PC-3 (cell line): ENCODE measurements at regions of chr6 and their contacts with region 1.

Region 1: DNA sequence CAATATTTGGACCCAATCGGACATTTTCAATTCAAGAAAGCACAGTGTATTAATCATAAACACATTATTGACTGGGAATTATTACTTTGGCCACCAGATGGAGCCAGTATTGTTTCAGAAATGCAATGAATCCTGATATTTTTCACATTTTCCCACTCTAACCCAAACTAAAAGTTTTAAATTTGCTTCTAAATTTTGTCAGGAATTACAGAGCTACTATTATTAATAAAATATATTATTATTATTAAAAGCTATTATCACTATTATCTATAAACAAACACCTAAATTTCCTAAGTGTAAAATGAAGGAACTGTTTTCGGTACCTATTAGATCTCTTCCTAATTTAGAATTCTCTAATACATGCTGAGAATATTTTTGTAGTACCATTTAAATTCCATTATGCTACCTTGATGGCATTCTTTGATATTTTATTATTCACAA is 245.3 kb downstream of the OGFRL1 start:
- DNase-seq: peak; percentile 45
- ATAC-seq: no peak
- H3K4me3 ChIP-seq: no peak overlapping the region
- H3K27ac ChIP-seq: no peak overlapping the region
- H3K4me1 ChIP-seq: peaks cover 4% of the 10 kb centered on the region
- H3K27me3 ChIP-seq: no peaks in the 10 kb centered on the region
- CTCF ChIP-seq: peak; percentile 48; the same call in 1 of the 2 replicates

Region 2: GRCh38 chr6:71621918-71622519 is 88.1 kb after region 1 on chr6:
- CTCF ChIA-PET with region 1: no interaction called
- POLR2A ChIA-PET with region 1: no interaction called
- intact Hi-C with region 1: loop called (anchors 5 kb)
- DNase-seq: peak; percentile 47
- ATAC-seq: 0 out of 2 replicates have a peak, but pooled peaks have one; percentile 37
- H3K4me3 ChIP-seq: no peak overlapping the region
- H3K27ac ChIP-seq: no peak overlapping the region
- H3K4me1 ChIP-seq: no peaks in the 10 kb centered on the region
- H3K27me3 ChIP-seq: no peaks in the 10 kb centered on the region
- CTCF ChIP-seq: peak; percentile 63

Region 3: GRCh38 chr6:72042088-72042487 is 508.1 kb after region 1 on chr6:
- CTCF ChIA-PET with region 1: no interaction called
- POLR2A ChIA-PET with region 1: no interaction called
- intact Hi-C with region 1: loop called (anchors 5 kb)
- DNase-seq: peak; percentile 2
- ATAC-seq: no peak
- H3K4me3 ChIP-seq: no peak overlapping the region
- H3K27ac ChIP-seq: no peak overlapping the region
- H3K4me1 ChIP-seq: no peaks in the 10 kb centered on the region
- H3K27me3 ChIP-seq: no peaks in the 10 kb centered on the region
- CTCF ChIP-seq: no peak

Region 4: DNA sequence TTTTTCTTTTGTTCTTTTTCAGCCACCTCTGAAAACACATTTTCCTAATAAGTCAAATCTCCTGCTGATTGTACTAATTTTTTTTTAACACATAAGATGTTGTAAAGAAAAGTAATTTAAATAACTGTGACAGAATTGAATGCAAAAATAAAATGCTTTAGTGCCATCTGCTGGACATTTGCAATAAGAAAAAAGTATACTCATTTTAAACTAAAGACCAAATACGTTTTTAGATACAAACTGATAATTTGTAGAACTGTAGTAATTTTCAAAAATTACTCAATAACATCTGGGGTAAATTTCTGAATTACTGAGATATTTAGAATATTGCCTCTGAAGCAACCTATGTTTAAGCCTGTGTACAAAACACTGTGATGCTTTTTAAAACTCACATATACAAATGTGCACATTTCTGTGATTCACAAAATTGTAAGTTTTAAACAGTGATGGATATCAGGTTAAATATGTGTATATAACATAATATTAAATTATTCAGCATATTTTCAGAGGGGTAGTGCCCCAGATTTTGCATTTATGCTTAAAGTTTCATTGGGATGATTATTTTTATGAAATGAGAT is 551.1 kb after region 1 on chr6:
- CTCF ChIA-PET with region 1: no interaction called
- POLR2A ChIA-PET with region 1: no interaction called
- intact Hi-C with region 1: loop called (anchors 1 kb)
- DNase-seq: peak; percentile 25
- ATAC-seq: no peak
- H3K4me3 ChIP-seq: no peak overlapping the region
- H3K27ac ChIP-seq: no peak overlapping the region
- H3K4me1 ChIP-seq: no peaks in the 10 kb centered on the region
- H3K27me3 ChIP-seq: peaks cover 11% of the 10 kb centered on the region; the same call in 1 of the 2 replicates
- CTCF ChIP-seq: peak; percentile 64